ENCODE measurements at regions of chr3 and their contacts with region 1.

Region 1: DNA sequence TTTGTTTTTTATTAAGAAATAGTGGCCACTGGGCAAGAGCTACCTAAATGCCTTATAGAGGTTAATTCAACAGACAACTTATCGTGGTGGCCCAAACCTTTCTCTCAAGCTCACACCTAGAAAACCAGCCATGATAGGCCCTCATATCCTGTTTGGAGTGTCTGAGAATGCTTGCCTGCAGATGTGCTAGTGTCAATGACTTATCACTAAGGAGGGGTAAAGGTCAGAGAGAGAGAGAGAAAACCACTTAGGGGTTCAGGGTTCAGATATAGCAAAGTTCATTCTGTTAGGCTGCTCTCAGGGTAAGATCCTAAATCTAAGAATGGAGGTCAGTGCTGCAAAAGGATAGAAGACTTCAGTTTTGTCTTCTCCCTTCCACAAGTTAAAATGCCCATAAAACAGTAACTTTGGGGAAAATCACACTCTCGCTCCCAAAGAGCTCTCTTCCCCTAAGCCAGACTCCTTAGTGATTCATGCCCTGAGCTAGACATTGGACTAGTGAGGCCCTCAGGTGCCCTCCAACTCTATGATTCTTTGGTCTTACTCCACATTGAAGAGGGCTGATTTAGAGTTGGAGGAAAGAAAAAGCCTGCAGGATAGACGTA is 30.3 kb upstream of the B3GNT5 start:
- DNase-seq: no peak
- H3K4me3 ChIP-seq: no peak overlapping the region
- H3K27ac ChIP-seq: no peak overlapping the region
- H3K4me1 ChIP-seq: peaks cover 0 to 26% (median 18%) of the 10 kb centered on the region in 4 experiments
- H3K27me3 ChIP-seq: no peaks in the 10 kb centered on the region

Region 2: GRCh38 chr3:183006396-183007002 is 216.2 kb before region 1 on chr3:
- CTCF ChIA-PET with region 1: no interaction called
- POLR2A ChIA-PET with region 1: no interaction called
- DNase-seq: no peak
- H3K4me3 ChIP-seq: no peak overlapping the region
- H3K27ac ChIP-seq: no peak overlapping the region
- H3K4me1 ChIP-seq: peaks cover 0 to 3% (median 0%) of the 10 kb centered on the region in 4 experiments
- H3K27me3 ChIP-seq: no peaks in the 10 kb centered on the region

Region 3: DNA sequence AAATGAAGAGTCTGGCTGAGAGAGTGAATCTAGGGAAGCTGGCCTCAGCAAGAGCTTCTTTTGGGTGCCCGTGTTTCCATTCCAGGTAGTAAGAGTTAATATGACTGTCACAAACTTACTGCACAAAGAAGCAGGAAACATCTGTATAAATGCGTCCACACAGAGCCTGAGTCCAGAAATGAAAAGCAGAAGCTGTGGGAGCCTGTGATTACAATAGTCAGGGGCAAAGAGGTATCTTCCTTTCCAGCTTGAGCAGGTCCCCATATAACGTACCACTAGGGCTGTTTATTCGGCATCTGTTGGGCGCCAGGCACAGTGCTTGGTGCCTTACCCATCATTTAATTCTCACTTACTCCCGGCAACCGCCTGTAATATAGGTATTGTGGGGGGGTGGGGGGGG is 10.2 kb before region 1 on chr3:
- CTCF ChIA-PET with region 1: interaction called, 14 read pairs
- POLR2A ChIA-PET with region 1: no interaction called
- DNase-seq: peak; percentile 94 to 99 (median 98)
- H3K4me3 ChIP-seq: peak overlapping the region in 3 of 7 experiments; percentile 12 to 30 (median 24)
- H3K27ac ChIP-seq: peak overlapping the region; percentile 56 to 84
- H3K4me1 ChIP-seq: peaks cover 21 to 54% (median 45%) of the 10 kb centered on the region in 4 experiments
- H3K27me3 ChIP-seq: no peaks in the 10 kb centered on the region

Region 4: GRCh38 chr3:183328823-183329222 is 106.1 kb after region 1 on chr3:
- CTCF ChIA-PET with region 1: no interaction called
- POLR2A ChIA-PET with region 1: no interaction called
- DNase-seq: peak in 1 of 3 donors; percentile 15
- H3K4me3 ChIP-seq: no peak overlapping the region
- H3K27ac ChIP-seq: no peak overlapping the region
- H3K4me1 ChIP-seq: peaks cover 0 to 6% (median 3%) of the 10 kb centered on the region in 4 experiments
- H3K27me3 ChIP-seq: no peaks in the 10 kb centered on the region

Region 5: GRCh38 chr3:183349421-183350157 is 126.9 kb after region 1 on chr3:
- CTCF ChIA-PET with region 1: no interaction called
- POLR2A ChIA-PET with region 1: no interaction called
- DNase-seq: no peak
- H3K4me3 ChIP-seq: no peak overlapping the region
- H3K27ac ChIP-seq: no peak overlapping the region
- H3K4me1 ChIP-seq: peaks cover 0 to 3% (median 0%) of the 10 kb centered on the region in 4 experiments
- H3K27me3 ChIP-seq: no peaks in the 10 kb centered on the region

Region 6: DNA sequence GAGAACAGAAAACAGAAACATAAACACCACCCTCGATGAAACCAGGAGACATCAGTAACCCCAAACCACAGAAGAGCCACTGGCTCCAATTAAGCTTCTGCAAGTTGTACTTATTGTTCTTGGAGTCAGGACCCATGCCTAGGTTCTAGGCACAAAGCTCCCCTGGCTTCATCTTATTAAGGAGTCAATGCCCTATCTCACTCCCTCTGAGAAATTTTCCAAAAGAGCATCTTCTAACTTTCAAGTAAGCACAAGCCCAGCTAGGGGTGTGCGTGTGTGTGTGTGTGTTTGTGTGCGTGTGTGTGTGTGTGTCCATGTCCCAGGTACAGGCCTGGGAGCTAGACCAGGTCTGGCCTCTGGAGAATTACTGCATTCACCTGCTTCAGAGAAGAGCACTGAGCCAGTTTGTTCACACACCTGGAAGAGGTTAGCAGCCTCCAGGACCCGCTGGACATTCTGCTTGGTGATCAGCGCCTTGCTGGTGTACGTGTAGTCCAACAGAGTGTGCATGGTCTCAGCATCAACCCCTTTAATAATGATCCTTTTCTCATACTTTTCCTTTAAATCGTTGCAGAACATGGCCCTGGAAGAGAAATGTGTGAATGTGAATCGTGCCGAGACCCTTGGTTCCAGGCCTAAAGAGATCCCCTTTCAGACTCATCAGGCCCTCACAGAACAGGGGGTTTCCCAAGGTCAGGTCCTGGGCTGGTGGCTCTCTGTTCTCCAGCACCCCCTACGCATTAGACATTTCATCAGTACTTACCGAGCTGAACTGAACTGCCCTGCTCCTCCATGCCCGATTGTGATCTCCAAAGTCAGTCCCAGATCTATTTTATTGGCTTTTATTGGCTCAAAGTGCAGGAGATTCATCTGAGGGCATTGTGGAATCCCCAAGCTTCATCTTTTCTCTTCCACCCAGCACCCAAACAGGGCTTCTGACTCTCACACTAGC is 305.0 kb after region 1 on chr3:
- CTCF ChIA-PET with region 1: no interaction called
- POLR2A ChIA-PET with region 1: no interaction called
- DNase-seq: peak in 2 of 3 donors; percentile 40 to 46
- H3K4me3 ChIP-seq: no peak overlapping the region
- H3K27ac ChIP-seq: no peak overlapping the region
- H3K4me1 ChIP-seq: peaks cover 0 to 13% (median 9%) of the 10 kb centered on the region in 4 experiments
- H3K27me3 ChIP-seq: no peaks in the 10 kb centered on the region